GM12878 (cell line): ENCODE measurements at regions of chr7 and their contacts with region 1.

Region 1: DNA sequence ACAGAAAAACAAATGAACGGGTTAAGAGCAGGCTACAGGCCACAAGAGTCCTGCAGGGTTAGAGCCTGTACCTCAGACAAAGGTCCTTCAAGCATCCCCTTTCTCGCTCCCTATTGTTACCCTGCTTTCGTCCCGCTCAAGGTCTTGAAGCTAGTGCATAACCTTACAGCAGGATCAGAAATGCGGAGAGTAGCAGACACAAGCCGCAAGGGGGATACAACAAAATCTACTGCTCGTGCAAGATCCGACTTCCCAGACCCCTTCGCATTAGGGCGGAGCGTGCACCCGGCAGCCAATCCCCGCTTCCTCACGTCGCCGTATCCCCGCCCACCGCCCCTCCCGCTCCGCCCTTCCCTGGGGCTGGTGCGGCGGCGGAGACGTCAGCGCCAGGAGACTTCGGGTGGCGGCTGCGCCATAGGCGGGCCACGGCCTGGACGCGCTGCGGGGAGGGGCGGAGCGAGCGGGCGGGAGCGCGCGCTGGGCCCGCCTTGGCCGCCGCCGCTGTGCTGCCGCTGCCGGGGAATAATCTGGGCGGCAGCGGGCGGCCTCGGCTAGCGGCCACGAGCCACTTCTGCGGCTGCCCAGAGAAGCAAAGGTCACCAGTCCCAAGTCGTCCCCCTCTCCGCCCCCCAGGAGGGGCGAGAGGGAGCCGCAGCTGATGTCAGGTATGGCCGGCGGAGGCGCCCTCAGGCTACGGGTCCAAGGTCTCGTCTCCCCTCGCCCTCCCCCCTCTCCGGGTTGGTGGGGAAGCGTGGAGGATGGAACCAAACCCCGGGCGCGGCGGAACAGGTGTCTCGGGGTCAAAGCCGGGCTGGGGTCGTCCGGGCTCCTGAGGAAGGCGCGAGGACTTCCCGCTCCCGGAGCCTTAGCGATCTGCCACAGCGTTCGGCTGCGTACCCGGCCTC is at the start of gene C1GALT1:
- DNase-seq: peak; percentile 92
- ATAC-seq: peak; percentile 90
- H3K4me3 ChIP-seq: peak within 1 kb of the TSS; percentile 95
- H3K27ac ChIP-seq: peak within 1 kb of the TSS; percentile 96
- H3K4me1 ChIP-seq: peaks cover 9% of the 10 kb centered on the region
- H3K27me3 ChIP-seq: no peaks in the 10 kb centered on the region
- CTCF ChIP-seq: peak; percentile 44 to 55 (median 48)
- EP300 ChIP-seq: 0 out of 4 replicates have a peak, but pooled peaks of 1 of the 2 experiments have one; percentile 5
- POLR2A ChIP-seq: peak; percentile 81
- RAD21 ChIP-seq: peak; percentile 57
- polyA plus RNA-seq, gene C1GALT1: 1.6 to 2.7 TPM

Region 2: GRCh38 chr7:7257899-7258692 is 75.7 kb after region 1 on chr7:
- CTCF ChIA-PET with region 1: interaction called, 19 read pairs
- POLR2A ChIA-PET with region 1: interaction called, 6 read pairs
- RAD21 ChIA-PET with region 1: interaction called, 34 read pairs
- SMC1A ChIA-PET with region 1: interaction called, 15 read pairs
- in situ Hi-C with region 1: no loop called
- intact Hi-C with region 1: loop called (anchors 1 kb)
- DNase-seq: peak; percentile 86
- ATAC-seq: peak; percentile 96
- H3K4me3 ChIP-seq: peak overlapping the region; percentile 47; the same call in 1 of the 2 replicates
- H3K27ac ChIP-seq: peak overlapping the region; percentile 59
- H3K4me1 ChIP-seq: peaks cover 20% of the 10 kb centered on the region
- H3K27me3 ChIP-seq: no peaks in the 10 kb centered on the region
- CTCF ChIP-seq: no peak
- EP300 ChIP-seq: peak in 1 of 2 experiments; percentile 69; a peak in 1 of 4 replicates
- POLR2A ChIP-seq: no peak
- RAD21 ChIP-seq: no peak

Region 3: GRCh38 chr7:7347045-7347444 is 164.6 kb after region 1 on chr7:
- CTCF ChIA-PET with region 1: interaction called, 10 read pairs
- POLR2A ChIA-PET with region 1: no interaction called
- RAD21 ChIA-PET with region 1: interaction called, 6 read pairs
- SMC1A ChIA-PET with region 1: interaction called, 5 read pairs
- in situ Hi-C with region 1: no loop called
- intact Hi-C with region 1: no loop called
- DNase-seq: no peak
- ATAC-seq: no peak
- H3K4me3 ChIP-seq: no peak overlapping the region
- H3K27ac ChIP-seq: no peak overlapping the region
- H3K4me1 ChIP-seq: no peaks in the 10 kb centered on the region
- H3K27me3 ChIP-seq: no peaks in the 10 kb centered on the region; a peak in 1 of 4 replicates
- CTCF ChIP-seq: no peak
- EP300 ChIP-seq: no peak
- POLR2A ChIP-seq: no peak
- RAD21 ChIP-seq: no peak

Region 4: GRCh38 chr7:7439564-7439963 is 257.2 kb after region 1 on chr7:
- CTCF ChIA-PET with region 1: no interaction called
- POLR2A ChIA-PET with region 1: no interaction called
- RAD21 ChIA-PET with region 1: no interaction called
- SMC1A ChIA-PET with region 1: no interaction called
- in situ Hi-C with region 1: no loop called
- intact Hi-C with region 1: no loop called
- DNase-seq: no peak
- ATAC-seq: no peak
- H3K4me3 ChIP-seq: no peak overlapping the region
- H3K27ac ChIP-seq: no peak overlapping the region
- H3K4me1 ChIP-seq: no peaks in the 10 kb centered on the region
- H3K27me3 ChIP-seq: no peaks in the 10 kb centered on the region; a peak in 1 of 4 replicates
- CTCF ChIP-seq: no peak
- EP300 ChIP-seq: no peak
- POLR2A ChIP-seq: no peak
- RAD21 ChIP-seq: no peak

Region 5: DNA sequence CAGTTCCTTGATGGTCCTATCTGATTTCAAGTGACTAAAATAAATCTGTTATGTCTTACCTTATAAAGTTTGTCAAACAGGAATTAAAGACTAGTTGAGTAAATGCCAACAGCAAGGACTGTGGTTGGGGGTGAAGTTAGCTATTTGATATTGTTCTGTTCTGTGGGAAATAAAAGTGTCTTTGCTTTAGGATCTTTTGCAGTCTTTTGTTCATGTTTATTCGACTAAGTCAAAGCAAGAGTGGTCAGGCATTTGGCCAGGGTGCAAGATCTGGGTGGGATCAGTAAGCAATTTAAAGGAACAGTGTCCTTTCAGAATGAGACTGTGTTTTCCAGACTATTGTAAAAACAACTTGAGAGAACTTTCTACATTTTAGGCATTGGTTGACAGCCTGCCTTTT is 353.3 kb after region 1 on chr7 and contains the start of gene COL28A1:
- CTCF ChIA-PET with region 1: interaction called, 4 read pairs
- POLR2A ChIA-PET with region 1: no interaction called
- RAD21 ChIA-PET with region 1: interaction called, 3 read pairs
- SMC1A ChIA-PET with region 1: interaction called, 4 read pairs
- in situ Hi-C with region 1: no loop called
- intact Hi-C with region 1: loop called (anchors 10 kb)
- DNase-seq: no peak
- ATAC-seq: no peak
- H3K4me3 ChIP-seq: no peak within 1 kb of the TSS
- H3K27ac ChIP-seq: no peak within 1 kb of the TSS
- H3K4me1 ChIP-seq: no peaks in the 10 kb centered on the region
- H3K27me3 ChIP-seq: no peaks in the 10 kb centered on the region
- CTCF ChIP-seq: no peak
- EP300 ChIP-seq: no peak
- POLR2A ChIP-seq: no peak
- RAD21 ChIP-seq: no peak
- polyA plus RNA-seq, gene COL28A1: not detected

Region 6: DNA sequence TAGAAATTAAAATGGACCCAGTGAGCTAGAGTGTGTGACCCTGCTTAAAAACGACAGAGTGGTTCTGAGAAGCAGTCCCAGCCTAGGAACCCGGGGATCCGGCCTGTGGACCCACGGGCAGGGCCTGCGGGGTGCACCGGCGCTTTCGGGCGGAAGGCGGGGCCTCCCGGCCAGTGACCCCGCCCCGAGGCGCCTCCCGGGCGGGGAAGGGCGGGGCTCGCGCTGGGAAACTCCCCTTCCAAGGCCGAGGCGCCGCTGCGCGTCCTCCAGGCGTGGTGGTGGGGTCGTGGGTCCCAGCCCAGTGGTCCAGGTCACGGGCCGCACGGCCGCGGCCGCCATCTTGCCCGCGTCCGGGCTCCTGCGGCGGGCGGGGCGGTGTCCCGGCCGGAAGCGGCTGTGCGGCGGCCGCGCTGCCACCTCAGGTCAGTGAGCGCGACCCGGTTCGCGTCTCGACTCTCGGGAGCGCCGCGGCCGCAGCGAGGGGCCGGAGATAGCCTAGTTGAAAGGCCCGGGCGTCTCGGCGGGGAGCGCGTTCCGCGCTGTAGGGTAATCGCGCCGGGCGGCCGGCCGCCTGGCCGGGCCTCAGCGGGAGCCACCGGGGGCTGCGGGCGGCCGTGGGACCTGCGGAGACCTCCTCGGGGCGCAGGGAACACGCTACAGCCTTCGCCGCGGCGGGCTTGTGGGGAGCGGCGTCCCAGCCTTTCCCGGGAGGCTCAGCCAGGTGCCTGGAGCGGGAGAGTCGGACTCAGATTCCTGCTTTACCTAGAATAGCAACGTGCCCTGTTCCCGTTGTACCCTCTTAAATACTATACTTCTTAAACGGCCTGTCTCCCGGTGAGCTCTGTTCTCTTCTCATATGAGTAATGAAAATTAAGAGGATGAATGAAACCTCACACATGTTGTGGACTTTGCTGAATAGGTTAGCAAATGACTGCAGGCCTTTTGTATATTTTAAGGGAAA is 384.5 kb after region 1 on chr7 and contains the start of gene MIOS:
- CTCF ChIA-PET with region 1: interaction called, 4 read pairs
- POLR2A ChIA-PET with region 1: no interaction called
- RAD21 ChIA-PET with region 1: interaction called, 12 read pairs
- SMC1A ChIA-PET with region 1: interaction called, 4 read pairs
- in situ Hi-C with region 1: no loop called
- intact Hi-C with region 1: loop called (anchors 2 kb)
- DNase-seq: no peak
- ATAC-seq: peak; percentile 74
- H3K4me3 ChIP-seq: peak within 1 kb of the TSS; percentile 89
- H3K27ac ChIP-seq: peak within 1 kb of the TSS; percentile 99
- H3K4me1 ChIP-seq: peaks cover 9% of the 10 kb centered on the region
- H3K27me3 ChIP-seq: no peaks in the 10 kb centered on the region
- CTCF ChIP-seq: no peak
- EP300 ChIP-seq: no peak
- POLR2A ChIP-seq: peak; percentile 89
- RAD21 ChIP-seq: no peak
- polyA plus RNA-seq, gene MIOS: 13.1 to 18.7 TPM

Region 7: GRCh38 chr7:7577888-7578287 is 395.5 kb after region 1 on chr7:
- CTCF ChIA-PET with region 1: no interaction called
- POLR2A ChIA-PET with region 1: no interaction called
- RAD21 ChIA-PET with region 1: no interaction called
- SMC1A ChIA-PET with region 1: no interaction called
- in situ Hi-C with region 1: no loop called
- intact Hi-C with region 1: no loop called
- DNase-seq: no peak
- ATAC-seq: peak; percentile 73
- H3K4me3 ChIP-seq: no peak overlapping the region
- H3K27ac ChIP-seq: no peak overlapping the region; the same call in 1 of the 2 replicates
- H3K4me1 ChIP-seq: peaks cover 10% of the 10 kb centered on the region
- H3K27me3 ChIP-seq: no peaks in the 10 kb centered on the region
- CTCF ChIP-seq: no peak
- EP300 ChIP-seq: no peak
- POLR2A ChIP-seq: no peak
- RAD21 ChIP-seq: no peak